Activated CD4-positive, alpha-beta memory T cell treated with anti-CD3 and anti-CD28 coated beads, Interleukin-2, amount 10 ng/mL, durations not matched to agents 7 days and 5 days (primary cell): ENCODE measurements at regions of chr3 and their contacts with region 1.

Region 1: GRCh38 chr3:172595641-172596393 is 72.6 kb upstream of the TNFSF10 start:
- DNase-seq: peak; percentile 51
- H3K4me3 Mint-ChIP-seq: peak overlapping the region; percentile 72
- H3K27ac Mint-ChIP-seq: peak overlapping the region; percentile 76
- H3K4me1 Mint-ChIP-seq: peaks cover 60% of the 10 kb centered on the region
- H3K27me3 Mint-ChIP-seq: no peaks in the 10 kb centered on the region

Region 2: DNA sequence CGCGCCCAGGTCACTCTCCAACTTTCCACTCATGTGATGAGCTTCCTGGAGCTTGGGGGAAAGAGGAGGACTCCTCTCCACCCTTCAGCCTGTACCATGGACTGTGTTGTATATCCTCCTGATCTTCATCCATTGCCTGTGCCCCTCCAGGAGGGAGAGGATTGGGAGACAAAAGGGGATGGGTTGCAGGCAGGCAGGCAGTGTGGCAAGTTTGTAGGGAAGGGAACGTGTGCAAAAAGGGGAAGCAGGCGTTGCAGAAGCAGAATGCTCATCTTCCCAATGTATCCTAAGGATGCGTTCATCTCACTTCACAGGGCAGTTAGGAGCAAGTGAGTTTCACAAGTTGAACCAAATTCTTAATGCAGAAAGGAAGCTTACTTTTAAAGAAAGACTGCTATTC is 119.5 kb before region 1 on chr3:
- CTCF ChIA-PET with region 1: interaction called, 20 read pairs
- POLR2A ChIA-PET with region 1: interaction called, 4 read pairs
- DNase-seq: no peak
- H3K4me3 Mint-ChIP-seq: peak overlapping the region; percentile 79
- H3K27ac Mint-ChIP-seq: no peak overlapping the region
- H3K4me1 Mint-ChIP-seq: peaks cover 19% of the 10 kb centered on the region
- H3K27me3 Mint-ChIP-seq: peaks cover under 1% of the 10 kb centered on the region

Region 3: DNA sequence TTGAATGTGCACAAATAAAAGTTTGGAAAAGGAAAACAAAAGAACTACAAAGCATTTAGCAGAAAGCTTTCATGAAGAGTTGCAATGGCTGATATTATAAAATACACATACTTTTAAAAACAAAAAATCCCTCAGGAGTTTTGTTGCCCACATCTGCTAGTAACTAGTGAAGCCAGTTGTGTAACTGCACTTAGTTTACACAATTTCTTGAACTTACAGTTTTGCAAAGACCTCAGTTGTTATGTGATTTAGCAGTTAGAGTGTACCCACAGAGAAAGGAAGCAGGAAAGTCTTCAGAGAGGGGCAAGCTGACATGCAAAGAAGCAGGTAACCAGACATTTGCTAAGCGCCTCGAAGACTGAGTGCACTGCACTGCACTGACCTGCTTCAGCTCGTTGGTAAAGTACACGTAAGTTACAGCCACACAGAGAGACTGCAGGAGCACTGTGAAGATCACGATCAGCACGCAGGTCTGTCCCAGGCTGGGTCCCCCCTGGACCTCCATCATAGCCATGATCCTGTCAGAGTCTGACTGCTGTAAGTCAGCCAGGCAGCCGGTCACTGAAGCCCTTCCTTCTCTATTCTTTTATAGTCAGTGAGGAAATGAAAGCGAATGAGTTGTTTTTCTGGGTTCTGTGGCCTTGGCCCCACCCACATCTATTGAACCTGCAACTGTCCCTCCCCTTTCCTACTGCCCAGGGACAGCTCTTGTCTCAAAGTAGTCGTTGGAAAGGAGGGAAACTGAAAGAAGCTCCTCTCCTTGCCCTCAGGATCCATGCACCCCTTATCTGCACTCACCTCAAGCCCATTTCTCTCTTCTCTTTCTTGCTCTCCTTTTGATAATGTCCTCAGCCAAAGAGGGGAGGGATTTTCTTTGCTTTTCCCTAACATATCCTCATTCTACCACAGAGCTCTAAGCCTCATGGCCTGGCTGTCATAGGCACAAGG is 72.7 kb before region 1 on chr3 and contains the start of gene TNFSF10:
- CTCF ChIA-PET with region 1: interaction called, 72 read pairs
- POLR2A ChIA-PET with region 1: interaction called, 149 read pairs
- DNase-seq: peak; percentile 85
- H3K4me3 Mint-ChIP-seq: peak within 1 kb of the TSS; percentile 100
- H3K27ac Mint-ChIP-seq: peak within 1 kb of the TSS; percentile 87
- H3K4me1 Mint-ChIP-seq: peaks cover 45% of the 10 kb centered on the region
- H3K27me3 Mint-ChIP-seq: no peaks in the 10 kb centered on the region
- total RNA-seq, gene TNFSF10: 118 to 119 TPM

Region 4: GRCh38 chr3:172562871-172563863 is 32.6 kb before region 1 on chr3:
- CTCF ChIA-PET with region 1: interaction called, 14 read pairs
- POLR2A ChIA-PET with region 1: interaction called, 40 read pairs
- DNase-seq: peak; percentile 32
- H3K4me3 Mint-ChIP-seq: peak overlapping the region; percentile 63
- H3K27ac Mint-ChIP-seq: peak overlapping the region; percentile 84
- H3K4me1 Mint-ChIP-seq: peaks cover 32% of the 10 kb centered on the region
- H3K27me3 Mint-ChIP-seq: no peaks in the 10 kb centered on the region

Region 5: GRCh38 chr3:172622916-172623700 is 27.3 kb after region 1 on chr3:
- CTCF ChIA-PET with region 1: interaction called, 33 read pairs
- POLR2A ChIA-PET with region 1: no interaction called
- DNase-seq: peak; percentile 37
- H3K4me3 Mint-ChIP-seq: no peak overlapping the region
- H3K27ac Mint-ChIP-seq: no peak overlapping the region
- H3K4me1 Mint-ChIP-seq: peaks cover 4% of the 10 kb centered on the region
- H3K27me3 Mint-ChIP-seq: no peaks in the 10 kb centered on the region

Region 6: GRCh38 chr3:172685346-172686214 is 89.8 kb after region 1 on chr3:
- CTCF ChIA-PET with region 1: no interaction called
- POLR2A ChIA-PET with region 1: no interaction called
- DNase-seq: no peak
- H3K4me3 Mint-ChIP-seq: peak overlapping the region; percentile 1
- H3K27ac Mint-ChIP-seq: peak overlapping the region; percentile 63
- H3K4me1 Mint-ChIP-seq: peaks cover 32% of the 10 kb centered on the region
- H3K27me3 Mint-ChIP-seq: no peaks in the 10 kb centered on the region